Kidney (tissue), 22 donors: ENCODE measurements at regions of chr9 and their contacts with region 1.

Region 1: GRCh38 chr9:19925817-19926503 is 137.1 kb upstream of the SLC24A2 start:
- DNase-seq: peak; percentile 71 to 90 (median 87)
- H3K4me3 ChIP-seq: peak overlapping the region; percentile 46 to 77 (median 61)
- H3K27ac ChIP-seq: no peak overlapping the region
- H3K4me1 ChIP-seq: peaks cover 0 to 2% (median 0%) of the 10 kb centered on the region in 3 donors
- H3K27me3 ChIP-seq: no peaks in the 10 kb centered on the region
- CTCF ChIP-seq: peak; percentile 93

Region 2: GRCh38 chr9:20070336-20070735 is 144.4 kb after region 1 on chr9:
- intact Hi-C with region 1: no loop called
- DNase-seq: no peak
- H3K4me3 ChIP-seq: no peak overlapping the region
- H3K27ac ChIP-seq: no peak overlapping the region
- H3K4me1 ChIP-seq: no peaks in the 10 kb centered on the region
- H3K27me3 ChIP-seq: no peaks in the 10 kb centered on the region
- CTCF ChIP-seq: no peak

Region 3: DNA sequence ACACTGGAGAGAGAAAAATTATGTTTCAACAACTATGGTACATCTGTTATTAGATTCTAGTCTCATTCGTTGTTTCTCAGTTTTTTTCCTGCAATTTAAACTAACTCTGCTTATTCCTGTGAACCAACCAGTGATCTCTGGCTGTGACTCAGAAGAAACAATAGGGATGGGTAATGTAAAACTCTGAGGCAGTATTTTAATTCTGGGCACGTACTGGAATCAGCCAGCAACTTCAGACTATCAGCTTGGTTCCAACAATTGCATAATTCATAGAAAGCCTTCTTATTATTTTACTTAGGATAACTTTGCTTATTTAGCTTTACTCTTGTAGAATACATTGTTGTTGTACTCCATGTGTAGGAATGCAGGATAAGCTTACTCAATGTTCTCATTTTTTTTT is 667.6 kb after region 1 on chr9:
- intact Hi-C with region 1: no loop called
- DNase-seq: no peak
- H3K4me3 ChIP-seq: no peak overlapping the region
- H3K27ac ChIP-seq: no peak overlapping the region
- H3K4me1 ChIP-seq: no peaks in the 10 kb centered on the region
- H3K27me3 ChIP-seq: no peaks in the 10 kb centered on the region
- CTCF ChIP-seq: no peak

Region 4: DNA sequence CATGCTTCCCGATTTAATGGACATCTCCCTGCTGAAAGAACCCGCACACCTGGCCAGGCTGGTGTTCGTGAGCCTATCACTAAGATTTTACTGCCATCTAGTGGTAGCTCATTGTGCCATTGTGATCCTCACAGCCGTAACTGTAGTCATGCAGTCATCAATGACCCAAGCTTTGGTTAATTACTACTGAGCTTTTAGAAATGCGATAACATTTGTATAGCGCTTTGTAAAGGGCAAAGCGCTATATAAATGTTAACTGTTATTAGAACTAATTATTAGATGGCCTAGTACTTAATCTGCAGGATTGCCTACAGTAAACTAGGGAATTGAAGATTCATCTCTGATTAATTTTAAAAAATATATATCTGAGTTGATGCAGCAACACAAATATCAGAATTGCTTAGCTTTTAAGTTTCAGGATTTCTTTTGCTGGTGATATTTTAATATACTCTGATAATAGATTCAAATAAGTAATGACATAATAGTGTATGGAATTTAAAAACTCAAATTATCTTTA is 1015.3 kb after region 1 on chr9:
- intact Hi-C with region 1: loop called (anchors 10 kb)
- DNase-seq: peak in 4 of 5 donors; percentile 50 to 86 (median 71)
- H3K4me3 ChIP-seq: no peak overlapping the region
- H3K27ac ChIP-seq: no peak overlapping the region
- H3K4me1 ChIP-seq: no peaks in the 10 kb centered on the region
- H3K27me3 ChIP-seq: no peaks in the 10 kb centered on the region
- CTCF ChIP-seq: peak; percentile 77

Region 5: GRCh38 chr9:21102305-21102704 is 1176.3 kb after region 1 on chr9:
- intact Hi-C with region 1: loop called (anchors 10 kb)
- DNase-seq: no peak
- H3K4me3 ChIP-seq: no peak overlapping the region
- H3K27ac ChIP-seq: no peak overlapping the region
- H3K4me1 ChIP-seq: no peaks in the 10 kb centered on the region
- H3K27me3 ChIP-seq: no peaks in the 10 kb centered on the region
- CTCF ChIP-seq: no peak